ENCODE measurements at regions of chr1 and their contacts with region 1.

Region 1: GRCh38 chr1:27357281-27358037 is 9.3 kb downstream of the MAP3K6 start:
- DNase-seq: peak; percentile 50
- H3K4me3 Mint-ChIP-seq: no peak overlapping the region
- H3K27ac Mint-ChIP-seq: no peak overlapping the region
- H3K4me1 Mint-ChIP-seq: peaks cover 4% of the 10 kb centered on the region
- H3K27me3 Mint-ChIP-seq: no peaks in the 10 kb centered on the region
- CTCF ChIP-seq: peak; percentile 95

Region 2: DNA sequence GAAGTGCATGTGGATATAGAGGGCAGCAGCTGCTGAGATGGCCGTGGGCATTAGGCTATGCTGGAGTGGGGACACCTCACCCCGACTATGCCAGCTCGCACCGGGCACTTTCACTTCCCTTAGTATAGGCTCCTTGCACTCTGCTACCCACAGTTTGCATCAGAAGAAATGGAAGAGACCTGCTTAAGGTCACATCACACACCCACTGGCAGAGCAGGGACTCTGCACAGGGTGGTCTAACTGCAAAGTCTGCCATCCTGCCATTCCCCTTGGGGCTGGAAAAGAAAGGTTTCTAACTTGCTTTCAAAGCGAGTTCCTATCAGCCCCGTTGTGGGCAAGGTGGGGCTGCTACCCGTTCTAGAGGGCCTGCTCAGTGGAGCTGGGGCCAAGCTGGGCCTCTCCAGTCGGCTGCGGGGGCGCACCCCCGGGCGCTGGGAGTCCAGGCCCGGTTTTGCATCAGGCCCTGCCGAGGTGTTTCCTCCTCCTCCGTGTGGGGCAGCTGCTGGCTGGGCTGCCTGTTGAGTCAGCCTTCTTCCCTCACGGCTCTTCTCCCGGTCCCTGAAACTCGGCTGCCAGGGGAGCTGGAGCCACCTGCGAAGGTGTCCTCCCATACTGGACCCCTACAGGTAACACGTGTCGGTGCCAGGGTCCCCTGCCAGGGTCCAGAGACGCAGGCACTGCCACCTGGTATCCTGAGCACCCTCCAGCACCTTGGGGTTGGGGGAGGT is 15.8 kb before region 1 on chr1 and contains the start of gene SYTL1:
- CTCF ChIA-PET with region 1: interaction called, 45 read pairs
- POLR2A ChIA-PET with region 1: interaction called, 33 read pairs
- intact Hi-C with region 1: no loop called
- DNase-seq: peak; percentile 89
- H3K4me3 Mint-ChIP-seq: peak within 1 kb of the TSS; percentile 82
- H3K27ac Mint-ChIP-seq: peak within 1 kb of the TSS; percentile 95
- H3K4me1 Mint-ChIP-seq: peaks cover 46% of the 10 kb centered on the region
- H3K27me3 Mint-ChIP-seq: no peaks in the 10 kb centered on the region
- CTCF ChIP-seq: no peak
- total RNA-seq, gene SYTL1: 64.8 and 81.8 TPM in 2 replicates